ENCODE measurements at regions of chr12 and their contacts with region 1.

Region 1: DNA sequence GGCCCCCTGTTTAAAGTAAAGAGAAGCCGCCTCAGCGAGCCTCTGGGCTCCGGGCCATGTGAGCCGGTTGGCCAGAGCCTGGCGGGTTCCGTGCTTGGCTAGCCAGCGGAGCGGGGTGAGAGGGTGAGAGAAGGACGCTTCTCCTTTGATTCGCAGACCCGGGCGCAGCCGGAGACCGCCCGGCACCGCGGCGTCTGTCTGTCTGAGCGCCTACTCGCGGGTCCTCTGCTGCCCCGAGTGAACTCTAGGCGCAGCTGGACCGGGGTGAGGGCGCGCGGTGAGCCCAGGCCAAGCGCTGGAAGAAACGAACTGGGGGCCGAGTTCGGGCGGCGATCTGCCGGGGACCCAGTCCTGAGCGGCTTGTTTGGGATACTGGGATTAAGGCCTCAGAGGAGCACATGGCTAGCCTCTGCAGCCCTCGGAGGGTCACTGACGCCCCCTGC is 41.4 kb upstream of the TBX5 start:
- DNase-seq: no peak
- H3K4me3 Mint-ChIP-seq: no peak overlapping the region
- H3K27ac Mint-ChIP-seq: no peak overlapping the region
- H3K4me1 Mint-ChIP-seq: peaks cover 1% of the 10 kb centered on the region
- H3K27me3 Mint-ChIP-seq: peaks cover 80% of the 10 kb centered on the region

Region 2: GRCh38 chr12:113802966-113803758 is 644.1 kb before region 1 on chr12:
- intact Hi-C with region 1: no loop called
- DNase-seq: no peak
- H3K4me3 Mint-ChIP-seq: no peak overlapping the region
- H3K27ac Mint-ChIP-seq: no peak overlapping the region
- H3K4me1 Mint-ChIP-seq: no peaks in the 10 kb centered on the region
- H3K27me3 Mint-ChIP-seq: no peaks in the 10 kb centered on the region

Region 3: DNA sequence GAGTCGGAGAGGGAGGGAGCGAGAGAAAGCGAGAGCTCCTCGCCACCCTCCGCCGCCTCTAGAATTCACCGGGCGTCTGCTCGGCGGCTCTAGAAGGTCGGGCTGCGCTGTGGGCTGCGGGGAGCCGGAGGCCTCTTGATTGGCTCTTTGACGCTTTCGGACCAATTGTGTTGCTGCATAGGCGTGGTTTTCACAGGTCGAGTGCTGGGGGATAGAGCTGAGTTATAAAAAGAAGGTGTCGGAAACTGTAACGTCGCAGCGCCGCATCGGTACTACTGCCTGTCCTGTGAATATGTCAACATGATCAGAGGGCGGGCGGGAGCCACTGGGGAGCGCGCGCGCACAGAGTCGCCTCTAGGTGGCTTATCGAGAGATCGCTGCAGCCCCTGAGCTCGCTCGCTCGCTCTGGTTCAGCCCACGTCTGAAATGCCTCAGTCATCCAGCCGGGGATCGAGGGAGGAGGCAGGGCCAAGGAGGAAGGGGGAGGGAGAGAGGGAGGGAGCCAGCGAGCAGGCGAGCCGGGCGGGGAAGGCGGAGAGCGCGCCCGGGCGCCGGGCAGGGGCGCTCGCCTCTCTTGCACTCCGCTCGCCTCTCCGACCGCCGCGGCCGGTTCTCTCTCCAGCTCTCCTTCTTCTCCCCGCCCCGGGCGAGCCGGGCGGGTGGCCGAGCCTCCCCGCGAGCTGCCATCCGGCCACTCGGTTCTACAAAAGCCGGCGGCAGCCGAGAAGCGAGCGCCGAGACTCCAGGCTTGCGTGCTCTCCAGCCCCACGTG is 237.0 kb after region 1 on chr12 and contains the start of gene TBX3:
- intact Hi-C with region 1: loop called (anchors 5 kb)
- DNase-seq: peak; percentile 73
- H3K4me3 Mint-ChIP-seq: peak within 1 kb of the TSS; percentile 57
- H3K27ac Mint-ChIP-seq: peak within 1 kb of the TSS; percentile 81
- H3K4me1 Mint-ChIP-seq: peaks cover 10% of the 10 kb centered on the region
- H3K27me3 Mint-ChIP-seq: peaks cover 91% of the 10 kb centered on the region
- total RNA-seq, gene TBX3: not detected in 2 replicates

Region 4: GRCh38 chr12:115572440-115572839 is 1125.1 kb after region 1 on chr12:
- intact Hi-C with region 1: no loop called
- DNase-seq: no peak
- H3K4me3 Mint-ChIP-seq: no peak overlapping the region
- H3K27ac Mint-ChIP-seq: no peak overlapping the region
- H3K4me1 Mint-ChIP-seq: no peaks in the 10 kb centered on the region
- H3K27me3 Mint-ChIP-seq: no peaks in the 10 kb centered on the region